Endothelial cell of umbilical vein (primary cell): ENCODE measurements at regions of chr5 and their contacts with region 1.

Region 1: GRCh38 chr5:54415896-54416601 is 39.5 kb upstream of the HSPB3 start:
- DNase-seq: no peak
- H3K4me3 ChIP-seq: no peak overlapping the region
- H3K27ac ChIP-seq: no peak overlapping the region
- H3K4me1 ChIP-seq: no peaks in the 10 kb centered on the region
- H3K27me3 ChIP-seq: peaks cover 8 to 12% of the 10 kb centered on the region in 2 experiments
- CTCF ChIP-seq: no peak
- POLR2A ChIP-seq: no peak

Region 2: DNA sequence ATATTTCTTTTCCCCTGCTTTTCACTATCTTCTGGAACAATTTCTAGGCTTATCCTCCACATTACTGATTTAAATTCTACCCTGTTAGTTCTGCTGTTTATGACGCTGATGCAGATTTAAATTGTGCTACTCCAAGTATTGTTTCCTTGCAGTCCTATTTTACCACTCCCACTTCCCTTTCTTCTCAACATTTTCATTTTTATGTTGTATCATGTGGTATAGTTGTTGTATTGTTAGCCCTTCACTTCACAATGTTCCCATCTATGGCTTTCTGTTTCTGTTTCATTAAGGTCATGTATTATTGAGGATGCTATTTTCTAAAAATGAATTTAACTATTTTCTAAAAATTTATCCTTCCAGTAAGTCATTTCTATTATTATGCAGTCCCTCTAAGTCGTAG is 601.2 kb before region 1 on chr5:
- CTCF ChIA-PET with region 1: no interaction called
- POLR2A ChIA-PET with region 1: no interaction called
- dilution Hi-C with region 1: no loop called
- intact Hi-C with region 1: no loop called
- DNase-seq: no peak
- H3K4me3 ChIP-seq: no peak overlapping the region
- H3K27ac ChIP-seq: no peak overlapping the region
- H3K4me1 ChIP-seq: no peaks in the 10 kb centered on the region
- H3K27me3 ChIP-seq: peaks cover 0 to 5% of the 10 kb centered on the region in 2 experiments
- CTCF ChIP-seq: no peak
- POLR2A ChIP-seq: no peak

Region 3: DNA sequence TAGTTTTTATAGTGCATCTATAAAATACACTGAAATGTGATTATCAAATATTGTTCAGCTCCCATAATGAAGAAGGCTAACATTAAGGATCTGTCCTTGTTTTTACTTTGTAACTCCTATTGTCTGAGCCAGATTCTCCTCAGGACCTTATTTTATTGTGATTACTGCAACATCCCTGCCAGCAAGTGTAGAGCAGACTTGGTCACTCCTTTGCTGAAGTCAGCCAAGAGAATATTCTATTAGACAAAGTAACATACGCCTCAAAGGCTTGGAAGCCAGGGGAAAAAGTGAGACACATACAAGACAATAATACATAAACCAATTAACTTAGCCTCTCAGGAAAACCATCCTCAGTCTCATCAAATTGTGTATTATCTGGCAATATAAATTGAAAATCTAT is 375.2 kb before region 1 on chr5:
- CTCF ChIA-PET with region 1: no interaction called
- POLR2A ChIA-PET with region 1: no interaction called
- dilution Hi-C with region 1: no loop called
- intact Hi-C with region 1: no loop called
- DNase-seq: no peak
- H3K4me3 ChIP-seq: no peak overlapping the region
- H3K27ac ChIP-seq: no peak overlapping the region
- H3K4me1 ChIP-seq: no peaks in the 10 kb centered on the region
- H3K27me3 ChIP-seq: no peaks in the 10 kb centered on the region
- CTCF ChIP-seq: no peak
- POLR2A ChIP-seq: no peak

Region 4: DNA sequence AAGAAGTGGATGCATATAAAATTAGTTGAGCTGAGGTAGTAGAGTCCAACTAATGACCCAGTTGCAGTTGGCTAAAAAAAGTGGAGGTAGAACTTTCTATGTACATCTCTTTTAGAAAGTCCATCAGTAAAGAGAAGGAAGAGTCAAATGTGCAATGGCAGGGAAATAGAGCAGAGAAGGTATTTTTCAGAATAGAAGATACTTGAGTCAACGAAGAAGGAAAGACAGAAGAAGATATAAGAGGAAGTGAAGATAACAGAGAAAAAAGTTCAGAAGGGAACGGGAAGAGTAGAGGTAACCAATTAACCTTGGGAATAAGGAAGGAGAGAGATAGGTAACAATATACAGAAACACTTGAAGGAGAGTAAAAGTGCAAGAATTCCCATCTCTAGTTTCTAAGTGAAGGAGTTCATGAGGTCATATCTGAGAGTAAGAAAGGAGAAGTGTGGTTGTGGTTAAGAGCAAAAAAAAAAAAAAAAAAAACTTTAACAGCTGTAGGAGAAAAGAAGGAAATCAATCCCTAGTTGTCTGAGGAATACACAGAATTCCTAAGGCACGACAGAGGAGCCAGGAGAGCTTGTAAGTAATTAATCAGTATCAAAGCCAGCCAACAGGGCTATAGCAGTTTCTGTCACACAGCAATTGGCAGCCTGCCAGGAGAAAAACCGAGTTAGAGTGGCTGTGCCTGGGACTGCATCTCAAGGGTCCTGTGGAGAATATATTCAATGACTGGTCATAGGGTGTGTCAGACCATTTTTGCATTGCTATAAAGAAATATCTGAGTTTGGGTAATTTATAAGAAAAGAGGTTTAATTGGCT is 166.6 kb before region 1 on chr5:
- CTCF ChIA-PET with region 1: interaction called, 151 read pairs
- POLR2A ChIA-PET with region 1: no interaction called
- dilution Hi-C with region 1: no loop called
- intact Hi-C with region 1: no loop called
- DNase-seq: no peak
- H3K4me3 ChIP-seq: no peak overlapping the region
- H3K27ac ChIP-seq: no peak overlapping the region
- H3K4me1 ChIP-seq: peaks cover 6% of the 10 kb centered on the region
- H3K27me3 ChIP-seq: no peaks in the 10 kb centered on the region
- CTCF ChIP-seq: no peak
- POLR2A ChIP-seq: no peak

Region 5: GRCh38 chr5:54254482-54255198 is 161.4 kb before region 1 on chr5:
- CTCF ChIA-PET with region 1: interaction called, 26 read pairs
- POLR2A ChIA-PET with region 1: no interaction called
- dilution Hi-C with region 1: no loop called
- intact Hi-C with region 1: no loop called
- DNase-seq: peak; percentile 44
- H3K4me3 ChIP-seq: no peak overlapping the region
- H3K27ac ChIP-seq: no peak overlapping the region
- H3K4me1 ChIP-seq: no peaks in the 10 kb centered on the region
- H3K27me3 ChIP-seq: no peaks in the 10 kb centered on the region
- CTCF ChIP-seq: peak in 1 of 2 donors; percentile 15
- POLR2A ChIP-seq: no peak

Region 6: GRCh38 chr5:54310433-54311175 is 105.4 kb before region 1 on chr5 and contains the start of gene ARL15:
- CTCF ChIA-PET with region 1: interaction called, 29 read pairs
- POLR2A ChIA-PET with region 1: interaction called, 4 read pairs
- dilution Hi-C with region 1: no loop called
- intact Hi-C with region 1: loop called (anchors 1 kb)
- DNase-seq: peak; percentile 98
- H3K4me3 ChIP-seq: peak within 1 kb of the TSS; percentile 83 to 95 (median 88)
- H3K27ac ChIP-seq: peak within 1 kb of the TSS; percentile 45
- H3K4me1 ChIP-seq: peaks cover 24% of the 10 kb centered on the region
- H3K27me3 ChIP-seq: peaks cover 8 to 11% of the 10 kb centered on the region in 2 experiments
- CTCF ChIP-seq: no peak
- POLR2A ChIP-seq: peak; percentile 99
- total RNA-seq, gene ARL15: 24.4 and 27.3 TPM in 2 replicates

Region 7: DNA sequence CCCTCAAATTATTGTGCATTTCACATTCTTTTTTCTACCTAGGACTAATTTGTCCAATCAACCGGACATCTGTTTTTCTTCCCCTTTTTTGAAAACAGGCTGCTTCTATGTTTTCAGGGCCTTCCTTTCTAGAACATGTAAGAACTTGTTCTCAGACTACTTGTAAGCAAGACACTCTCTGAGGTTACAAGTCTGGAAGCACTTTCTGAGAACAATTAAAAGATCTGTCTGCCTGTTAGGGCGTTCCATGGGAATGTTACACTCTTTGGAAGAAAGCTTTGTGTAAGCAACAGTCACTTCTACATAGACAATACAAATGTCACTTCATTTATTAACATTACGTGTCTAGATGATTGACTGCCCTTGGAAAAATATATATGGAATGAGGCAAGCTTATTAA is 11.5 kb before region 1 on chr5:
- CTCF ChIA-PET with region 1: interaction called, 30 read pairs
- POLR2A ChIA-PET with region 1: no interaction called
- dilution Hi-C with region 1: no loop called
- intact Hi-C with region 1: no loop called
- DNase-seq: peak; percentile 25
- H3K4me3 ChIP-seq: no peak overlapping the region
- H3K27ac ChIP-seq: no peak overlapping the region
- H3K4me1 ChIP-seq: no peaks in the 10 kb centered on the region
- H3K27me3 ChIP-seq: peaks cover 2 to 8% of the 10 kb centered on the region in 2 experiments
- CTCF ChIP-seq: no peak
- POLR2A ChIP-seq: no peak

Region 8: GRCh38 chr5:54541823-54542783 is 126.1 kb after region 1 on chr5:
- CTCF ChIA-PET with region 1: no interaction called
- POLR2A ChIA-PET with region 1: no interaction called
- dilution Hi-C with region 1: no loop called
- intact Hi-C with region 1: no loop called
- DNase-seq: no peak
- H3K4me3 ChIP-seq: no peak overlapping the region
- H3K27ac ChIP-seq: no peak overlapping the region
- H3K4me1 ChIP-seq: peaks cover 6% of the 10 kb centered on the region
- H3K27me3 ChIP-seq: no peaks in the 10 kb centered on the region
- CTCF ChIP-seq: no peak
- POLR2A ChIP-seq: no peak